Spleen (tissue), 13 donors: ENCODE measurements at regions of chr3 and their contacts with region 1.

Region 1: DNA sequence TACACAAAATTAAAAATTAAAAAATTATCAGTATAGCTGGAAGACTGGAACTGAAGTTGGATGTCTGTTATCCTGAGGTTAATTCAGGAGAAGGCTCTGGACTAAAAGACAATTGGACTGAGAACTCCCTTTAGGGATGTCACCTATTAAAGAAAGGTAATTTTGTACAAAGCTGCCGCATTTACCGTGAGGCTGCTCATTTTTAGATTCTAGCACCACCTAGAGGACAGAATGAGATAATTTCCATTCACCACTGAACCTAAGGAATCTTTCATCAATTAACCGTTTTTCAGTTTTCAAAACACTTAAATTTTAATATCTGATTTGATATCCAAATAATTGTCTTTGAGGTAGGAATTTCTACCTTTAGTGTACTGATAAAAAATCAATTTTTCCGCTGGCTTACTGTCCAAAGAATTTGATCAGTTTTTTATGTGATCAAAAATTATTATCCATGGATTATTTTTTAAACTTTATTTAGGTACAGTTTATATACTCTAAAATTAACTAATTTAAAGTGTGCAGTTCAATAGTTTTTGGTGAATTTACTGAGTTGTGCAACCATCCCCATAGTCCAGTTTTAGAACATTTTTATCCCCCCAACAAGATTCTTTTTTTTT is 106.7 kb upstream of the TNIK start:
- DNase-seq: no peak
- H3K4me3 ChIP-seq: no peak overlapping the region
- H3K27ac ChIP-seq: no peak overlapping the region
- H3K4me1 ChIP-seq: peaks cover 0 to 24% (median 7%) of the 10 kb centered on the region in 6 donors
- H3K27me3 ChIP-seq: no peaks in the 10 kb centered on the region
- CTCF ChIP-seq: peak; percentile 49 to 82 (median 73)
- POLR2A ChIP-seq: no peak

Region 2: DNA sequence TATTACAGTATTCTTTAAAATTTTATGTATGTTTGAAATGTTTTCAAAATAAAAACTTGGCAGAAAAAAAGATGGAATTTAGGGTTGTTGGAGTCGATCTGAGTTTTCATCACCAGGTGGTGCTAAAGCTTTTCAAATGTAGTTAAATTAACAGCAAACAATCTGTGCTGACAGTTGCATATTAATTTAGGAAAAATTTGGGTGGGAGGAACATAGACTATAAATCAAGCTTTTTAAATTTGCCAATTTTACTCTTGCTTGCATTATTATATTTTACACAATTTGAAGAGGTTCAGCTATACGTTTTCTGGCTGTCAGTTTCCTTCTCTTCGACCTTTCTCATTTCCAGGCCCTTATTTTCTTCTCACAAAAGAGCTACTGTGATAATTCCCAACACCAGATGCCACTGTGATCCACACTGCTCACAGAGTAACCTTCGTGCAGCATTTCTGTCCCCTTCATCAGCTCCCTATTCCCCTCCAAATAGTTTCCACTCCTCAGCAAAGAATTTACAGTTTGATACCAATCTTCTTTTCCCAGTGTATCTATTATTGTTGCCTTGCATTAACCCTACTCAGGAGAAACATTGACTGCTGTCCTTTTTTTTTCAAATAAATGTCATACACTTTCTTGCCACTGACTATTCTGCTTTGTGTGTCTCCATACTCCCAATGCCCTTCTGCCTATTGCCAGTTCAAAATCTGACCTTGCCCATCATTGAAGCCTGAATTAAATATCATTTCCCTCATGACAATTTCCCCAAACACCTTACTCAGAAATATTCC is 605.1 kb before region 1 on chr3:
- intact Hi-C with region 1: loop called (anchors 5 kb)
- DNase-seq: no peak
- H3K4me3 ChIP-seq: no peak overlapping the region
- H3K27ac ChIP-seq: no peak overlapping the region
- H3K4me1 ChIP-seq: no peaks in the 10 kb centered on the region
- H3K27me3 ChIP-seq: no peaks in the 10 kb centered on the region
- CTCF ChIP-seq: peak in 9 of 11 experiments; percentile 6 to 67 (median 53)
- POLR2A ChIP-seq: no peak

Region 3: DNA sequence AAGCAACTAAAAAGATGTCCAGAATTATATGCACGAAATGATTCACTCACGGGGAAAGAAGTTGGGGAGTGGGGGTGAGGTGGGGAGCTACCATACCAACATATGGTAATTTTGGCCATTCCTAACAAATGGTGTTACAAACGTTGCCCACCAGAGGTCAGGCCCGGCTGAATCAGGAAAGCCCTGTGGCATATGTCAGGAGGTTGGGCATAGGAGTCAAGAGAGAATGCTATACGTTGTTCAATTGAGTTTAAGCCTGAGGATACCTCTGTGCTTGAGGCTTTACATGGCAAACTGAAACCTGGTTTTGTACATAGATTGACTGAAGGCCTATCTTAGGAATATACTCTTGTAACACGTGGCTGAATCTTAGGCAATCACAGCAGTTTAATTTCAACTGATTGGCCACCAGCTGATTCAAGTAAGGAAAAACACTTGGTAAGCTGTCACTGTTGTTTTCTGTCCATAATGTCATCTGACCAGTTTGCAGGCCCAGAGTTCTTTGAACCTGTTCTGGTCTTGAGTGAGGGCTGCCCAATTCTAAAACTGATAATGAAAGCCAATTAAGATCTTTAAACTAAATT is 517.0 kb before region 1 on chr3:
- intact Hi-C with region 1: loop called (anchors 5 kb)
- DNase-seq: no peak
- H3K4me3 ChIP-seq: no peak overlapping the region
- H3K27ac ChIP-seq: no peak overlapping the region
- H3K4me1 ChIP-seq: no peaks in the 10 kb centered on the region
- H3K27me3 ChIP-seq: no peaks in the 10 kb centered on the region
- CTCF ChIP-seq: peak in 8 of 11 experiments; percentile 15 to 56 (median 50)
- POLR2A ChIP-seq: no peak

Region 4: DNA sequence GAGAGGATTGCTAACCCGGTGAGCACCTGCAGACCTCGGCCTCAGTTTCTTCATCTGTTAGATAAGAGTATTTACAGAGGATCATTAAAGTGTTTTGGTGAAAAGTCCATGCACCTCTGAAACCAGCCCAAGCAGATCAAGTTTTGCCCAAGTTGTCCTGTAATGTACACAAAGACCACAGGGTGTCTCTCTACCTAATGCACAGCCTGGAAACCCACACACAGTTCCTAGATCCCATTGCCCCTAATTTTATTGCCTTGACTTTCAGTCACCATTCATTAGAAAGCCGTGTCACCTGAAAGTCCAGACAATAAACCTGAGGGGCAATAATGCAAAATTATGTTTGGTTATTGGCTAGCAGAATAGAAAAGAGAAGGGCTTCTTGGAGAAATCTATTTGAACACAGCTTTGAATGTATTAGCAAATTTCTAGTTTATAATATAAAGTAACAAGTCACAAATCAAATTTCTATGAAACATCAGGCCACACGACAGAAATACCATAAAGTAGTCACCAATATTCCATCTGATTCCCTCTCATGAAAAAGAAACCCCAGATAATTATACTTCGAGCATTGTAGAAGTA is 379.1 kb before region 1 on chr3:
- intact Hi-C with region 1: loop called (anchors 5 kb)
- DNase-seq: no peak
- H3K4me3 ChIP-seq: no peak overlapping the region
- H3K27ac ChIP-seq: no peak overlapping the region
- H3K4me1 ChIP-seq: peaks cover 0 to 8% (median 0%) of the 10 kb centered on the region in 6 donors
- H3K27me3 ChIP-seq: no peaks in the 10 kb centered on the region
- CTCF ChIP-seq: peak in 9 of 11 experiments; percentile 20 to 73 (median 54)
- POLR2A ChIP-seq: no peak

Region 5: DNA sequence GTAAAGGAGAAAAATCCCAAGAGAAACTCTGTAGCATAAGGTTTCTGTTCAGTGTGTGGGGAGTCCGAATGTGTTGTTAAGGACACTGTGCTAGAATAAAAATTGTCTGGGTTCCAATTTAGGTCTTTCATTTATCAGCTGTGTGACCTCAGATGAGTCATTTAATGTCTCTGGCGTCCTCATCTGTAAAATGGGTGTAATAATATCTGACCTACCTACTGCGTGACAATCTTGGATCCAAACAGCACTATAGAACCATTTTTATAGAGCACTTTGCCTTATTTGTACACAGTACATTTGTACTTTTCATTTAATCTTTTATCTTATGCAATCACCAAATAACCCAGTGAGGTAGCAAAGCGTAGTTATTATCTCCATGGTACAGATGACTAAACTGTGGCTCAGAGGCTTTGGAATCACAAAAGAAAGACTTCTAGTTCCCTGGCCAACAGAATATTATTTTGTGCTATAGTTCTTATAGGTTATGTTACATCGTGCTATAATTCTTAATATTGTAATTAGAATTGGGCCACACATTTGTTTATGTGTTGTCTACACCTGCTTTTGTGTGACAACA is 60.1 kb before region 1 on chr3:
- intact Hi-C with region 1: no loop called
- DNase-seq: no peak
- H3K4me3 ChIP-seq: no peak overlapping the region
- H3K27ac ChIP-seq: no peak overlapping the region
- H3K4me1 ChIP-seq: no peaks in the 10 kb centered on the region
- H3K27me3 ChIP-seq: no peaks in the 10 kb centered on the region
- CTCF ChIP-seq: no peak
- POLR2A ChIP-seq: no peak